ENCODE measurements at regions of chr1 and their contacts with region 1.

Region 1: DNA sequence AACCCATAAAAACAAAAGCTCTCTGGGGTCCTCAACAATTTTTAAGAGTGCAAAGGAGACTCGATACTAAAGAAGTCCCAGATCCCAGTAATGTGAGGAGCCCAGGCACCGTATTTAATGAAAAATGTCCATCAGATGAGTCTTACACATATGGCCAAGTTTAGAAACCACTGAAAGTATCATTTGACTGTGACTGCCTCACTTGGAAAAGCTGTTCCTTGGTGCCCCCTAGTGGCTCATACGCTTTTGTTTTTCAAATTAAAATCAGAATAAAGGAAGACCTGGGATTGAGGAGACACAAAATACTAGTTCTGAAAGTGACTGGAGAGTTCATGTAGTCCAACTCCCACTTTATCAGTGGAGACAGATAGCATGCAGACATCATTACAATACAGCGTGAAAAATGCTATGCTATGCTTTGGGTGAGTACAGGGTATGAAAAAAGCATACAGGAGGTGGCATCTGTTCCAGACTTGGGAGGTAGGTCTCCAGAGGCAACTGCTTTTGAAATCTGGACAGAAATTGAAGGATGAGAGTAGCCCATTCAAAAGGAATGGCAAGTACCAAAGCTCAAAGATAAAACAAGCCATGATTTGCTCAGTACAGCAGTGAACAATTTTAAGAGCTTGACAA is 33.8 kb downstream of the GDAP2 start:
- DNase-seq: peak in 1 of 2 donors; percentile 56
- ATAC-seq: peak in 4 of 8 donors; percentile 42 to 63 (median 48)
- H3K4me3 ChIP-seq: no peak overlapping the region
- H3K27ac ChIP-seq: no peak overlapping the region
- H3K4me1 ChIP-seq: peaks cover 0 to 7% (median 0%) of the 10 kb centered on the region in 9 donors
- H3K27me3 ChIP-seq: no peaks in the 10 kb centered on the region
- CTCF ChIP-seq: peak; percentile 51 to 84 (median 80)

Region 2: DNA sequence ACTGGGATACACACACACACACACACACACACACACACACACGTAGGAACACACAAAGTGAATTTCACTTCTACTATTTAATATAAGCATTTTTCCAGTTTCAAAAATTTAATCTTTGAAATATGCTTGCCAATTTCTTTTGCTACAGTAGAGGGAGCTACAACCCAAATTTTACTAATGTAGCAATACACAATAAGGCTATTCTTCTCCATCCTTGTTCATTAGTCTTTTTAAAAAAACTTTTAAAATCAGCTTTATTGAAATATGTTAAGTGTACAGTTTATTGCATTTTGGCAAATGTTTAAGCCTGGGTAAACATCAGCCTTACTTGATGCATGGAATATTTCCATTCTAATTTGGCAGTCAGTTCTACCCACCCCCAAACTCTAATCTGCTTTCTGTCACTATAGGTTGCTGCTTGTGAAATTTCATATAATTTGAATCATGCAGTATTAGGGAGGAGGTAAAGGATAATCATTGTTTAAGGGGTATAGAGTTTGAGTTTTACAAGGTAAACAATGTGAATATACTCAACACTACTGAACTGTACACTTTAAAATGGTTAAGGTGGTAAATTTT is 382.8 kb before region 1 on chr1:
- intact Hi-C with region 1: loop called in 9 of 10 experiments (anchors 5 to 10 kb)
- DNase-seq: no peak
- ATAC-seq: no peak
- H3K4me3 ChIP-seq: no peak overlapping the region
- H3K27ac ChIP-seq: no peak overlapping the region
- H3K4me1 ChIP-seq: no peaks in the 10 kb centered on the region
- H3K27me3 ChIP-seq: no peaks in the 10 kb centered on the region
- CTCF ChIP-seq: peak; percentile 13 to 65 (median 56)

Region 3: DNA sequence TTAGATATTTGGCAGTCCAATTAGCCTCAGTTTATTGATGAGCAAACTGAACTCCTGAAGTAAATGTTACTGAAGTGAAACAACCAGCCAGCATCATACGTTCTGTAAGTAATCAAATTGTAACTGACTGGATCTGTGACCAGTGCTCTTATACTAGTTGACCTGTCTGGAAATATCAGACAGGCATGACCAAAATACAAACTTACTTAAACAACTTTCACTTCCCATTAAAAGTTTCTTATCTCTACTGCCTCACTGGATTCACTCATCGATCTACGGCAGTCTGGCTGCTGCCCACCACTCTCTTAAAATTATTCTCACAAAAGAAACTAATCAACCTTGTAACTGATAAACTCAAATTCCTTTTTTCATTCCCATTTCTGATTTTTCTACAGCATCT is 90.4 kb after region 1 on chr1:
- intact Hi-C with region 1: no loop called
- DNase-seq: no peak
- ATAC-seq: no peak
- H3K4me3 ChIP-seq: no peak overlapping the region
- H3K27ac ChIP-seq: no peak overlapping the region
- H3K4me1 ChIP-seq: no peaks in the 10 kb centered on the region
- H3K27me3 ChIP-seq: peaks cover 0 to 11% (median 0%) of the 10 kb centered on the region in 7 donors
- CTCF ChIP-seq: no peak

Region 4: DNA sequence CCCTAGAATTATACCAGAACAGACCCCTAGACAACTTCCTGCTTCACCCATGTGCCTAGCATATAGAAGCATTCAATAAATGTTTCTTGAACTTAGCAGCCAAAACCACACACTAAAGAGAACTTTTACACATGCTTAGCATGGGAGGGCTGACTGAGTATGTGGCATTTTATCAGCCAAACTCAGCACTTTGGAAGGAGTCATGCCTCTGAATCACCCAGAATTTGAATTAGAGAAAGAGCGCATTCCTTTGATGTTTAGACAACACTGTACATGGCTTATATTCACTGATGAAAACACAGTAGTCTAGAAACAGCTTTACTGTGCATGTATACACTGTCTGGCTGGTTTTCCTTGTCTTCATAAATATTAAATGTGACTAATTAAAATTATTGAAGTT is 263.3 kb after region 1 on chr1:
- intact Hi-C with region 1: no loop called
- DNase-seq: no peak
- ATAC-seq: no peak
- H3K4me3 ChIP-seq: no peak overlapping the region
- H3K27ac ChIP-seq: no peak overlapping the region
- H3K4me1 ChIP-seq: no peaks in the 10 kb centered on the region
- H3K27me3 ChIP-seq: peaks cover 0 to 7% (median 0%) of the 10 kb centered on the region in 7 donors
- CTCF ChIP-seq: no peak

Measured in heart right ventricle (tissue), 16 donors.